T-cell (primary cell): ENCODE measurements at regions of chr1 and their contacts with region 1.

Region 1: DNA sequence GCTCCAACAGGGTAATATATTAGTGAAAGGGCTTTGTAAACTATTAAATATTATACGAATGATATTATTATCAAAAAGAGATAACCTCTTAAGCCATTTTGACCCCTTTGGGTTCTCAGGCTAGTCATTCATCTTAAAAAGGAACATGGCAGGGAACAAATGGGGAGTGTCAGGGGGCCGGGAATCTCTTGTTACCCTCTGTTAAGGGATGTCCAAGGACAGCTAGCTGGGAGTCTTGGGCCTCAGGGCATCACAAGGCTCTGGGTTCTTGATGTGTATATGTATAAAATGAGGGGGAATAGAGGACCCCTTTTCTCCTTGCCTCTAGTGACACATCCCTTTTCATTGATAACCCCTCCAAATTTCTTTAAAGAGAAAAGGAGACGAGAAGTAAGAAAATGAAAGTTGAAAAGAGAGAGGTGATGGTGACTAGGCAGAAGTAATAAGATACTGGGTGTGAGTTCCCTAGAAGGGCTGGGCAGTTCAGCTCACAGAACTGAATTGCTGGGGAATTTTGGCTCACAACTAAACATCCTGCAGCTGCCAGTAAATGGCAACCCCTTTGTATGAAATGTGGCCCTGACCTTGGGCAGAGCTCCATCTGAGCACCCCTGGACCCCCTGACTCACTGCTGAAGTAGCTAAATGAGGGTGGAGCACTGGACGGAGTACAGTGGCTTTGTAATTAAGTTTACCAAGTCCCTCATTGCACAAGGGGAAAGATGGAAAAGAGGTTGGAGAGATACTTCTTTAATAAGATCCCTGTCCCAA is 20.0 kb upstream of the ZNF326 start:
- DNase-seq: no peak
- ATAC-seq: no peak
- H3K4me3 ChIP-seq: no peak overlapping the region
- H3K4me3 Mint-ChIP-seq: no peak overlapping the region
- H3K27ac ChIP-seq: no peak overlapping the region
- H3K27ac Mint-ChIP-seq: no peak overlapping the region
- H3K4me1 ChIP-seq: no peaks in the 10 kb centered on the region
- H3K4me1 Mint-ChIP-seq: no peaks in the 10 kb centered on the region
- H3K27me3 ChIP-seq: no peaks in the 10 kb centered on the region
- H3K27me3 Mint-ChIP-seq: peaks cover 0 to 3% of the 10 kb centered on the region in 2 donors

Region 2: GRCh38 chr1:89532866-89533265 is 442.0 kb before region 1 on chr1:
- CTCF ChIA-PET with region 1: no interaction called
- POLR2A ChIA-PET with region 1: interaction called in 1 of 2 experiments, 13 read pairs
- DNase-seq: no peak
- ATAC-seq: no peak
- H3K4me3 ChIP-seq: no peak overlapping the region
- H3K4me3 Mint-ChIP-seq: no peak overlapping the region
- H3K27ac ChIP-seq: no peak overlapping the region
- H3K27ac Mint-ChIP-seq: no peak overlapping the region
- H3K4me1 ChIP-seq: peaks cover 2 to 4% of the 10 kb centered on the region in 2 experiments
- H3K4me1 Mint-ChIP-seq: peaks cover 62 to 75% (median 68%) of the 10 kb centered on the region in 3 donors
- H3K27me3 ChIP-seq: no peaks in the 10 kb centered on the region
- H3K27me3 Mint-ChIP-seq: no peaks in the 10 kb centered on the region